ENCODE measurements at regions of chr1 and their contacts with region 1.

Region 1: DNA sequence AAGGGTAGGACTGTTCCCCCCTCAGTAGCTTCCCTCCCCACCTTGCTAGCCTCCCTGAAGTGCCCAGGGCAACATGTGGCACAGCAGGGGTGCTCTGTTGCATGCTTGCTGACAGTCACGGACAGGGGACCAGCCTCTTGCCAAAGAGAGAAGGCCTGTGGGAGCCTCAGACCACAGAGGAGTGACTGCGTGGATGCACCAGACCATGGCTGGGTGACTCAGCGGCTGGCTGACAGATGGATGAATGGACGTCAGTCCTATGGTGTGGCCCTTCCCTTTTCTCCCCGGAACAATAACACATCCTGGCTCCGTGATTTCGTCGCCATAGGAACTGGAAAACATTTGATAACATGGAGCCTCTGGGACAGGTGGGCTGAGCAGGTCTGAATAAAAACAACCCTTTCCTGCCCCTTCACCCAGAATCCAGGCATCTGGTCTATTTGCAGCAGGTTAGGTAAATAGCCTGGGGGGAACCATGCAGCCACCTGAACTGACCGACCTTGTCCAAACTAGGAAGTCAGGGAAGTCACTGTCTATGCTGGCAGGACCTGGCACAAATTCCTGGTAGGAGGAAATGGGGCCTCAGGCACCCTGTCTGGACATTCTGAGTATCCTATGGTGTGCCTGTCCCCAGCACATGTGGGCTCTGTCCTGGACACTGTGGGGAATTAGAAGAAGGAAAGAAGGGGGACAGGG is 53.3 kb downstream of the NENF start:
- DNase-seq: peak; percentile 95 to 100
- H3K4me3 ChIP-seq: no peak overlapping the region
- H3K27ac ChIP-seq: peak overlapping the region; percentile 81
- H3K4me1 ChIP-seq: peaks cover 74% of the 10 kb centered on the region
- H3K27me3 ChIP-seq: no peaks in the 10 kb centered on the region
- CTCF ChIP-seq: no peak

Region 2: GRCh38 chr1:212186427-212187207 is 299.4 kb before region 1 on chr1:
- CTCF ChIA-PET with region 1: no interaction called
- POLR2A ChIA-PET with region 1: no interaction called
- intact Hi-C with region 1: no loop called
- DNase-seq: no peak
- H3K4me3 ChIP-seq: no peak overlapping the region
- H3K27ac ChIP-seq: no peak overlapping the region
- H3K4me1 ChIP-seq: no peaks in the 10 kb centered on the region
- H3K27me3 ChIP-seq: no peaks in the 10 kb centered on the region
- CTCF ChIP-seq: no peak

Region 3: DNA sequence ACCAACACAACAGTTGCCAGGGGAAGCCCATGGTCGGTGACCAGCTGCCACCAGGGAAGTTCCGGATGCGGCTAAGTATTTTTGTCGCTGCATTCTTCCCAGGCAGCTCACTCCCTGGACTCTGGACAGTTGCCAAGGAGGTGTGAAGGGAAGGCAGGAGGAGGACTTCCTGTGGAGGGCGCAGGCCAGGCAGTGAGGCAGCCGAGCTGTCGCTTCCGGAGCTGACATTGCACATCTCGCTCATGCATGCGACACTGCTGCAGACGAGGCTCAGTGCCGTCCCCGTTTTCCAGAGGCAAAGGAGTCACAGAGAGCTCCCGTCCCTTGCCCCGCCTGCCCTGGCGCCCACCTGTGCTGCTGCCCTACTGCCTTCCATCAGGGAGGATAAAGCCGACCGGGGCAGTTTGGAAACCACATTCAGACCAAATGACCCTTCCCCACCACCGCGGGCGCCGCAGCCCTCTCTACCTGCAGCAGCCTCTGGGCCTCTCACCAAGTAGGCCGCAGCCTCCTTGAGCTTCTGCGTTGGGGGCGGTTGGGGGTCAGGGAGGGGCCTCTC is 28.1 kb after region 1 on chr1:
- CTCF ChIA-PET with region 1: no interaction called
- POLR2A ChIA-PET with region 1: no interaction called
- intact Hi-C with region 1: loop called (anchors 1 kb)
- DNase-seq: peak; percentile 83 to 96
- H3K4me3 ChIP-seq: peak overlapping the region; percentile 25; the same call in 1 of the 2 replicates
- H3K27ac ChIP-seq: peak overlapping the region; percentile 76
- H3K4me1 ChIP-seq: peaks cover 28% of the 10 kb centered on the region
- H3K27me3 ChIP-seq: no peaks in the 10 kb centered on the region
- CTCF ChIP-seq: no peak; the same call in 1 of the 2 replicates

Region 4: GRCh38 chr1:212525479-212526110 is 39.6 kb after region 1 on chr1:
- CTCF ChIA-PET with region 1: no interaction called
- POLR2A ChIA-PET with region 1: no interaction called
- intact Hi-C with region 1: no loop called
- DNase-seq: no peak
- H3K4me3 ChIP-seq: no peak overlapping the region
- H3K27ac ChIP-seq: no peak overlapping the region
- H3K4me1 ChIP-seq: 0 out of 2 replicates have a peak, but pooled peaks cover 5% of the 10 kb centered on the region
- H3K27me3 ChIP-seq: no peaks in the 10 kb centered on the region
- CTCF ChIP-seq: no peak

Region 5: DNA sequence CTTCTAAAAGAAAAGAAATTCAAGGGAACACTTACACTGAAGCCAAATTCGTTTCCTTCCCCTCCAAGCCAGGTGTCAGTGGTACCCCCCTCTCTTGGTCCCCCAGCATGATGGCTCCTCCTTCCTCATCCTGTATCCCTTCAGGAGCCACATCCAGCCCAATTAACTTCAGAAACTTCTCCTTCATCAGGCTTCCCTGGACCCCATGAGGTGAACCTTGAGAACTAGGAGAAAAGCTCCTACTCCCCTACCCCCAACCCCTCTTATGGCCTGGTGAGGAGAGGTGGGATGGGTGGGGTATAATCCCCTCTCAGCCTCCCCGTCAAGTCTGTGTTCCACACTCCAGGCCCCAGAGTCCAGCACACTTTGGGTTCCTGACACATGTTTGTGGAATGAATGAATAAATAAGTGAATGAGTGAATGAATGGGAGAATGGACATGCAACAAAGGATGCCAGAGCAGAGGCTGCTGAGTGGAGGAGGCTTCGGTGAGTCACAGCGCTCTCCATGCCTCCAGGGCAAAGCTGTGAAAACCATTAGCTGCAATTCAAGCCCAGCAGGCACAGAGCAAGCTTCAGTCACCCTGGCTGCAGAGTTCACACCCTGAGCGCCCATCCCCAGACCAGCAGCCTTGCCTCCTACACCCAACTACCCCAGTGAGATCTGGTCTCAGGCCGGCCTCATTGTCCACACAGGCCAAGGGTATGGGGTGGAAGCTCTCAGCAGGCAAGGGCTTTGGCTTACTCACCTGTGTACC is 169.8 kb after region 1 on chr1:
- CTCF ChIA-PET with region 1: no interaction called
- POLR2A ChIA-PET with region 1: no interaction called
- intact Hi-C with region 1: no loop called
- DNase-seq: peak; percentile 86 to 91
- H3K4me3 ChIP-seq: no peak overlapping the region
- H3K27ac ChIP-seq: no peak overlapping the region
- H3K4me1 ChIP-seq: peaks cover 11% of the 10 kb centered on the region
- H3K27me3 ChIP-seq: peaks cover 8% of the 10 kb centered on the region; the same call in 1 of the 2 replicates
- CTCF ChIP-seq: no peak

Measured in PC-9 (cell line).